HAP-1 (cell line): ENCODE measurements at regions of chr5 and their contacts with region 1.

Region 1: GRCh38 chr5:178590141-178590923 is at the start of gene COL23A1:
- DNase-seq: peak; percentile 61 to 79
- H3K4me3 ChIP-seq: peak within 1 kb of the TSS; percentile 33
- H3K4me1 ChIP-seq: no peaks in the 10 kb centered on the region
- H3K27me3 ChIP-seq: 0 out of 2 replicates have a peak, but pooled peaks cover 2% of the 10 kb centered on the region

Region 2: DNA sequence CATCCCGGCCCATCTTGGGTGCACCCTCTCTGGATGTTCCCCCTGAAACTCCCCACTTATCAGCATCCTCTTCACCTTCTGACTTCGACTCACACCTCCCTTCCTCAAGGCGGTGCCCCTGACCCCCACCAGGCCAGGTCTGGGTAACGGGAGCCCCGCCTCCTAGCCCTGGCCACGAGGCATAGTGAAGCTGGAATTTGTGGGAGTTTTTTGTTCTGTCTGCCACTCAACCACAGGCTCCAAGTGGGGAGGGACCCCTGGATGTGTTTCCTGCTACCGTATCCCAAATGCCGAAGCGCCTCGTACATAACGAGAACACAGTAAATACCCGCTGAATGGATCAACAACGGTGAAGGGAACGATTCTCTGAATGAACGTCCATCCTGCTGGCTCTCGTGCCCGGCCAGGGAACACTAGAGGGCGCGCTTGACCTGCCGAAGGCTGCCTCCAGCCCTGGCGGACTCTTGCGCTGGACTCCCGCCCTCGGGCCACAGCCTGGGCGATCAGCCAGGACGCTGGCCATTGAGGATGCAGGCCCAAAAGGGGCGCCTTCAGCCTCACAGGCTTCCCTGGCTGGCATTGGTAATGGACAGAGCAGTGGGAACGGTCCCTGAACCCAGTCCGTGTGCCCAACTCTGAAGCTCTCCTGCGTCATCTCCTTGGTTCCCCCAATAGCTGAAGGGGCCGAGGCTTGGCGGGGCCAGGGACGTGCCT is 310.4 kb before region 1 on chr5:
- in situ Hi-C with region 1: loop called (anchors 5 kb)
- DNase-seq: peak; percentile 57 to 91
- H3K4me3 ChIP-seq: no peak overlapping the region
- H3K4me1 ChIP-seq: no peaks in the 10 kb centered on the region
- H3K27me3 ChIP-seq: no peaks in the 10 kb centered on the region

Region 3: DNA sequence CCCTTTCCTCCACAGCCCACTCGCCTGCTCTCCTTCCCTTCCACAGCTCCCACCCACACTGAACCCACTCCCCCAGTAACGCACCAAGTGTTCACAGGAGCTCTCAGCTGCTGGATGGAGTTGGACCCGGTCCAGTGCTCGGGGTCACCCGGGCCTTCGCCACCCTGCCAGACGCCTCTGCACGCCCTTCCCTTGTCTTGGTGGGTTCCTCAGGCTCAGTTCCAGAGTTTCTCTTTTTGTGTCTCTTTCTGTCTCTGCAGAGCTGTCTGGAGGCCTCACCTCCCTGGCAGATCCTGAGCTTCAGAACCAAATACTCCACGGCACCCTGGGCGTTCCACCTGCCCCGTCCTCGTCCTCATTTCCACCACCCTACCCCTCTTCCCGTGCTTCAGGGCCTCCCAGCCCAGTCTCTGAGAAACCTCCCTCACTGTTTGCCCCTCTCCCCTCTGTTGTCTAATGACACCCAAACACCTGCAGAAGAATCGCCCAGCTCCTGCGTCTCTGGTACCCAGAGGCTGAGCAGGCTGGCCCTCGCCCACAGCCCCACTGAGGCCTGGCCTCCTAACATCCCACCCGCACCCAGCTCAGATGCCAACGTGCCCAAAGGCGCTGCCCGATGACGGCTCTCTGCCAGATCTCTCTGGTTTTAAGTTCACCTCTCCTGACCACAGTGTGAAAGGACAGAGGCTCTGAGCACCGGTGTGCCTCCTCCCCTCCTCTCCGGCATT is 74.4 kb before region 1 on chr5:
- in situ Hi-C with region 1: no loop called
- DNase-seq: no peak
- H3K4me3 ChIP-seq: no peak overlapping the region
- H3K4me1 ChIP-seq: no peaks in the 10 kb centered on the region
- H3K27me3 ChIP-seq: no peaks in the 10 kb centered on the region